Common myeloid progenitor, CD34-positive (primary cell): ENCODE measurements at regions of chr3 and their contacts with region 1.

Region 1: GRCh38 chr3:42443819-42444436 is 33.5 kb upstream of the LYZL4 start:
- DNase-seq: peak; percentile 57 to 78 (median 71)
- H3K4me3 ChIP-seq: no peak overlapping the region
- H3K27ac ChIP-seq: no peak overlapping the region
- H3K4me1 ChIP-seq: no peaks in the 10 kb centered on the region
- H3K27me3 ChIP-seq: peaks cover 0 to 27% (median 9%) of the 10 kb centered on the region in 5 experiments

Region 2: GRCh38 chr3:42229942-42230688 is 213.8 kb before region 1 on chr3:
- CTCF ChIA-PET with region 1: interaction called, 11 read pairs
- POLR2A ChIA-PET with region 1: no interaction called
- DNase-seq: peak in 2 of 3 donors; percentile 41 to 53
- H3K4me3 ChIP-seq: no peak overlapping the region
- H3K27ac ChIP-seq: no peak overlapping the region
- H3K4me1 ChIP-seq: no peaks in the 10 kb centered on the region
- H3K27me3 ChIP-seq: no peaks in the 10 kb centered on the region

Region 3: DNA sequence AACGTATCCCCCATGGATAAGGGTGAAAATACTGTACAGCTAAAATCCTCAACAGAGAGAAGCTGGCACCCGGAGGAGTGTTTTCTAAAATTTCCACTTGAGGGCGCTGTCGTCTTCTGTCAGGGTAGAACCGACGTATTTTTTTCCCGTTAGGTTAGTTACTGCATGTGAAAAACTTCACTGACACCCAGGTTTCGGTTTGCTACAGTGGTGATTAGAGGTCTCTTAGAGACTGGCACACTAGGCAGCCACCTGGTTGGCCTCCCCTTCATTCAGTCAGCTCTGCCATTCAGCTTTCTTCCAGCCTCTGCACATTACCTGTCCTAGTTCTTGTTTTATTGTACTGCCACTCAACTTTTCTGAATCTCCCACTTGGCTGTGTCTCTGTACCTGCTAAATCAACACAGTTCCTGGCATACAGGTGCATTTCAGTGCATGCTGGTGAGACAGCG is 196.3 kb before region 1 on chr3:
- CTCF ChIA-PET with region 1: interaction called, 64 read pairs
- POLR2A ChIA-PET with region 1: no interaction called
- DNase-seq: peak; percentile 65 to 83 (median 80)
- H3K4me3 ChIP-seq: peak overlapping the region in 1 of 7 experiments; percentile 26
- H3K27ac ChIP-seq: no peak overlapping the region
- H3K4me1 ChIP-seq: no peaks in the 10 kb centered on the region
- H3K27me3 ChIP-seq: peaks cover 4 to 19% (median 10%) of the 10 kb centered on the region in 5 experiments